ENCODE measurements at regions of chr14 and their contacts with region 1.

Region 1: DNA sequence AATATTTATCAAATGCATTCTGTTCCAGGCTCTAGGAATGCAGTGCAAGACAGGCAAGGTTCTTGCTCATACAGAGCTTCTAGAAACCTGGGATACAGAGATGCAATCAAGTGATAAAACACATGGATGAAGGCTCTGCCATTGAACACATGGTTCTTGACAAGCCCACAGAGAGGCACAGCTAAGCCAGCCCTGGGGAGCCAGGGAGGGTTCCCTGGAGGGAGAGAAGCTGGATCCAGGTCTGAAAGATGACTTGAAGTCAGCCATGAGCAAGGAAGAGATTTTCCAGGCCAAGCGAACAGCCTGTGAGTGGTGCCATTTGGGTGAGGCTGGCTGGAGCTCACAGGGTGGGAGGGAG is 66.2 kb downstream of the IRF2BPL start:
- DNase-seq: no peak
- H3K4me3 ChIP-seq: peak overlapping the region; percentile 50
- H3K27ac ChIP-seq: peak overlapping the region; percentile 47 to 75
- H3K4me1 ChIP-seq: peaks cover 3% of the 10 kb centered on the region
- H3K27me3 ChIP-seq: no peaks in the 10 kb centered on the region
- CTCF ChIP-seq: no peak
- EP300 ChIP-seq: no peak
- POLR2A ChIP-seq: no peak

Region 2: GRCh38 chr14:76863724-76864407 is 98.4 kb before region 1 on chr14:
- intact Hi-C with region 1: no loop called
- DNase-seq: no peak
- H3K4me3 ChIP-seq: no peak overlapping the region
- H3K27ac ChIP-seq: no peak overlapping the region
- H3K4me1 ChIP-seq: no peaks in the 10 kb centered on the region
- H3K27me3 ChIP-seq: no peaks in the 10 kb centered on the region
- CTCF ChIP-seq: no peak
- EP300 ChIP-seq: no peak
- POLR2A ChIP-seq: no peak

Region 3: DNA sequence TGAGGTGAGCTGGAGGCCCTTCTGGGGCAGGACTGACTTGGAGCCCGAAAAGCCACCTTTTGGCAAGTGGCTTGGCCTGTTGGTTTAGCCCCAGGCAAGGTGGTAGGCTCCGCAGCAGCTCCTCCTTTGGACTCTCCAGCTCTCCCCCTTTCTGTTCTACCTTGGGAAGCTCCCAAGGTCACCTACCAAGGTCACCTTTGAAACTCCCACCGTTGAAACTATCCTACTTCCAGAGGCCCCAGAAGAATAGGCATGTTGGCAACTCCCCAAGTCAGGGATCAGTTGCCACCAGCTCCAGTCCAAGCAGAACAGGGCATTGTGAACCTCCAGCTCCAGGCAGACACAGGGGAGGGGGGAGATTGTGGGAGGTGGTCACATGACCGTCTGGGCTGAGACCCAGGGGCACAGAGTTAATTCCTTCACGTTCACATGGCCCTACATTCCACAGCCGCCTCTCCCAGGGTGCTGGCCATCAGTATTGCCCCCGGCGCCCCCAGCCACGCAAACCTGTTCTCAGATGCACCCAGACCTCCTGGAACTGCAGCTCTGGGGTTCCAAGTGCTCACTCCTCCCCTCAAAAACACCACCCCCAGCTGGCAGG is 51.8 kb after region 1 on chr14:
- intact Hi-C with region 1: loop called in 3 of 4 experiments (anchors 5 kb)
- DNase-seq: peak; percentile 74 to 87 (median 81)
- H3K4me3 ChIP-seq: no peak overlapping the region
- H3K27ac ChIP-seq: peak overlapping the region in 1 of 2 donors; percentile 29
- H3K4me1 ChIP-seq: peaks cover 11% of the 10 kb centered on the region
- H3K27me3 ChIP-seq: no peaks in the 10 kb centered on the region
- CTCF ChIP-seq: no peak
- EP300 ChIP-seq: no peak
- POLR2A ChIP-seq: no peak

Region 4: GRCh38 chr14:77040059-77040740 is 77.9 kb after region 1 on chr14:
- intact Hi-C with region 1: loop called in 1 of 4 experiments (anchors 5 kb)
- DNase-seq: peak; percentile 99 to 100 (median 100)
- H3K4me3 ChIP-seq: peak overlapping the region; percentile 23
- H3K27ac ChIP-seq: peak overlapping the region; percentile 60 to 94
- H3K4me1 ChIP-seq: peaks cover 35% of the 10 kb centered on the region
- H3K27me3 ChIP-seq: no peaks in the 10 kb centered on the region
- CTCF ChIP-seq: no peak
- EP300 ChIP-seq: peak; percentile 89
- POLR2A ChIP-seq: peak; percentile 16

Region 5: DNA sequence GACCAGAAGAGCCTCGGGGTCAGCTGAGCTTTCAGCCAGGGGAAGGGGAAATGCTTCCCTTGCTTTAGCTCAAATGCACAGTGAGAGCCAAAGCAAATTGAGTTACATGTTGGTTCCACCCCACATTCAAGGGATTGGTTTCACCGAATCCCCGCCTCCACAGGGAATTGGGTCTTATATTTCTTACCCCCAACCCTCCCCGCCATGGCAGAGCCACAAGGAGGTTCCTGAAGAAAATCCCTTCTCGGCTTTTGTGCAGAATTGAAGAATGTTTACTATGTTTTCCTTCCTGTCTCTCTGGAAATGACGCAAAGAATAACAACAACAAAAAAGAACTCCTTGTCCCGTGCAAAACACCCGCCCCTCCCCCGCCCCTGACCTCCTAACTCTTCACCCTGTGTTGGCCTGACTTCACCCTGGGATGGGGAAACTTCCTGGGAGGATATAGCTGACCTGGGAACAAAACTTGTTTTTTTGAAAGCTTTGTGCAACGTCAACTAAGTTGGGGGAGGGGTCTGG is 113.9 kb after region 1 on chr14:
- intact Hi-C with region 1: no loop called
- DNase-seq: peak in 2 of 5 donors; percentile 70 to 86
- H3K4me3 ChIP-seq: peak overlapping the region; percentile 35
- H3K27ac ChIP-seq: peak overlapping the region in 1 of 2 donors; percentile 19
- H3K4me1 ChIP-seq: peaks cover 8% of the 10 kb centered on the region
- H3K27me3 ChIP-seq: no peaks in the 10 kb centered on the region
- CTCF ChIP-seq: no peak
- EP300 ChIP-seq: peak; percentile 86
- POLR2A ChIP-seq: peak; percentile 33

Region 6: GRCh38 chr14:77421201-77421600 is 458.9 kb after region 1 on chr14:
- intact Hi-C with region 1: no loop called
- DNase-seq: no peak
- H3K4me3 ChIP-seq: no peak overlapping the region
- H3K27ac ChIP-seq: no peak overlapping the region
- H3K4me1 ChIP-seq: no peaks in the 10 kb centered on the region
- H3K27me3 ChIP-seq: no peaks in the 10 kb centered on the region
- CTCF ChIP-seq: no peak
- EP300 ChIP-seq: no peak
- POLR2A ChIP-seq: no peak

Measured in ovary (tissue), 10 donors.